ENCODE measurements at regions of chr15 and their contacts with region 1.

Region 1: DNA sequence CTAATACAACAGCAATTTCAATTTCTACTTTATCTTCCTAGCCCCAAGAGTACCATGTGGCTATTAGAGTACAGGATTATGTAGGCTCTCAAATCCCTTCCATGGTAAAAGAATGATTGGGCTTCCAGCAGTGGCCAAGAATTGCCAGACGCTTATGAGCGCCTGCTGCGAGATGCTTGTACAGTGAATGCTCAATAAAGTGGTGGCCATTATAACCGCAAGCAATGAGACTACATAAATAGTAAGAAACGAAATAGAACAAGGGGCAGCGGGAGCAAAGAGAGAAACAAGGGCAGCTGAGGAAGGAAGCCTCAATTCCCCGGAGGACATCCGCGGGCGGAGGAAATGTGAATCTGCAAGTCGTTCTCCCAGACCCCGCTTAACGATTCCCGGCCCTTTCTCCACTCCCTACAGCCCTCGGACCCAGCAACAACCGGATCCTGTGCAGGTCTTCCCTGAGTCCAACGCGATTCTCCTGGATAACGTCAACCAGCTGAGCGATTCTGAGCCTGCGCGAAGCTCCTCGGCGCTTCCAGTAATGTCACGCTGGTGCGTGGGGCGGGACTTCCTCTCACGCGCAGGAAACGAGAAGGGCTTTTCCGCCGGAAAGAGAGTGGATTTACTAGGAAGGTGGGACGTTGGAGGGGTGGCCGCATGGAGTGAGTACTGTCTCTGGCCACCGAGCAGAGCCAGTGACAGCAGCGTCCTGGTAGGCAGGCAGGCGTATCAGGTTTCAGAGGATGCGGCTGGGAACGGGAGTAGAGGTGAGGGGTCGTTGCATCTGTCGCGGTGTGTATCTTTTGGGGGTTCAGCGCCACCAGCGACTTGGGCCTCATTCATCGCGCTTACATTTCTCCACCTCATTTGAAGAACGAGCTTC is 40.5 kb upstream of the AP3B2 start:
- DNase-seq: peak; percentile 92
- H3K4me3 Mint-ChIP-seq: peak overlapping the region; percentile 96
- H3K27ac Mint-ChIP-seq: peak overlapping the region; percentile 93
- H3K4me1 Mint-ChIP-seq: peaks cover 41% of the 10 kb centered on the region
- H3K27me3 Mint-ChIP-seq: no peaks in the 10 kb centered on the region

Region 2: GRCh38 chr15:82540055-82540983 is 209.9 kb before region 1 on chr15 and contains the start of gene RPS17:
- CTCF ChIA-PET with region 1: interaction called, 7 read pairs
- POLR2A ChIA-PET with region 1: interaction called, 17 read pairs
- intact Hi-C with region 1: loop called (anchors 5 kb)
- DNase-seq: peak; percentile 98
- H3K4me3 Mint-ChIP-seq: peak within 1 kb of the TSS; percentile 98
- H3K27ac Mint-ChIP-seq: peak within 1 kb of the TSS; percentile 88
- H3K4me1 Mint-ChIP-seq: peaks cover 27% of the 10 kb centered on the region
- H3K27me3 Mint-ChIP-seq: peaks cover 2% of the 10 kb centered on the region
- total RNA-seq, gene RPS17: 2,581 to 2,594 TPM

Region 3: GRCh38 chr15:82820128-82820527 is 69.9 kb after region 1 on chr15:
- CTCF ChIA-PET with region 1: no interaction called
- POLR2A ChIA-PET with region 1: no interaction called
- intact Hi-C with region 1: no loop called
- DNase-seq: no peak
- H3K4me3 Mint-ChIP-seq: no peak overlapping the region
- H3K27ac Mint-ChIP-seq: no peak overlapping the region
- H3K4me1 Mint-ChIP-seq: peaks cover 6% of the 10 kb centered on the region
- H3K27me3 Mint-ChIP-seq: no peaks in the 10 kb centered on the region

Region 4: GRCh38 chr15:82832601-82833361 is 82.6 kb after region 1 on chr15:
- CTCF ChIA-PET with region 1: interaction called, 5 read pairs
- POLR2A ChIA-PET with region 1: no interaction called
- intact Hi-C with region 1: loop called (anchors 1 kb)
- DNase-seq: peak; percentile 67
- H3K4me3 Mint-ChIP-seq: no peak overlapping the region
- H3K27ac Mint-ChIP-seq: peak overlapping the region; percentile 50
- H3K4me1 Mint-ChIP-seq: peaks cover 28% of the 10 kb centered on the region
- H3K27me3 Mint-ChIP-seq: no peaks in the 10 kb centered on the region

Region 5: GRCh38 chr15:82909080-82909815 is 159.1 kb after region 1 on chr15:
- CTCF ChIA-PET with region 1: no interaction called
- POLR2A ChIA-PET with region 1: no interaction called
- intact Hi-C with region 1: no loop called
- DNase-seq: no peak
- H3K4me3 Mint-ChIP-seq: no peak overlapping the region
- H3K27ac Mint-ChIP-seq: no peak overlapping the region
- H3K4me1 Mint-ChIP-seq: no peaks in the 10 kb centered on the region
- H3K27me3 Mint-ChIP-seq: peaks cover 11% of the 10 kb centered on the region

Region 6: GRCh38 chr15:82985688-82986441 is 235.7 kb after region 1 on chr15 and contains the start of gene RAMAC:
- CTCF ChIA-PET with region 1: interaction called, 6 read pairs
- POLR2A ChIA-PET with region 1: interaction called, 4 read pairs
- intact Hi-C with region 1: loop called (anchors 5 kb)
- DNase-seq: peak; percentile 95
- H3K4me3 Mint-ChIP-seq: peak within 1 kb of the TSS; percentile 98
- H3K27ac Mint-ChIP-seq: peak within 1 kb of the TSS; percentile 96
- H3K4me1 Mint-ChIP-seq: peaks cover 18% of the 10 kb centered on the region
- H3K27me3 Mint-ChIP-seq: no peaks in the 10 kb centered on the region
- total RNA-seq, gene RAMAC: 19.0 to 20.2 TPM

Region 7: DNA sequence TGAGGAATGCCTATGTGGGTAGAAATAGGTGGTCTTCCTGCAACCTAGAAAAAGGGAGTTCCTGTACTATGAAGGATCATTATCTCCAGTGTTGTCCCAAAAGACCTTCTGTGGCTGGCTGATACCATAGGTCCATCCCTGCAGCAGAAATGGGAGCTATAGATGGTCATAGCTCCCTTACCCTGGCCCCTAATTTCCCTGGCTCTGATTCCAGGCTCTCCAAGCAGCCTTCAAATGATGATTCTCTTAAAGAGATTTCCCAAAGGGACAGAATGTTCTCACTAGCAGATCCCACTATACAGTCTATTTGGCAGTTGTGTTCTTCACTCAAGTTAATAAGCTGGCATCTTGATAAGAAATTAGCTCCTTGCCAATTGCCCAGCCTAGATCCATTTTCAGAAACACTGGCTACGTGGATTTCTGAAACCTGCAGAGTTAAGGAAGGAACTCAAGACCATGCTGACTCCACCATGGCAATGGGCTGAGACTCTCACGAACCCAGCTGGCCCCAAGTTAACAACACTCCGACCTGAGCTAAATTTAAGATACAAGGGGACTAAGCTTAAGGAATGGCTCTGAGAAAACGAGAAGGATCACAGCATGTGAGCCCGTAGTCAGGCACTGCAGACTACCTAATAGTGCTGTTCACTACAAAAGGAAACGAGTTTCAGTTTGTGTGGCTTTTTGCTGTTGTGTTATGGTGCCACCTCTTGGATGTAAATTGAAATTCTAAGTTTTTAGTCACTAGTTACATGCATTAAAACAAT is 249.9 kb after region 1 on chr15:
- CTCF ChIA-PET with region 1: interaction called, 5 read pairs
- POLR2A ChIA-PET with region 1: interaction called, 4 read pairs
- intact Hi-C with region 1: loop called (anchors 1 kb)
- DNase-seq: peak; percentile 19
- H3K4me3 Mint-ChIP-seq: peak overlapping the region; percentile 36
- H3K27ac Mint-ChIP-seq: no peak overlapping the region
- H3K4me1 Mint-ChIP-seq: peaks cover 7% of the 10 kb centered on the region
- H3K27me3 Mint-ChIP-seq: no peaks in the 10 kb centered on the region